CD4-positive, alpha-beta T cell (primary cell): ENCODE measurements at regions of chr3 and their contacts with region 1.

Region 1: DNA sequence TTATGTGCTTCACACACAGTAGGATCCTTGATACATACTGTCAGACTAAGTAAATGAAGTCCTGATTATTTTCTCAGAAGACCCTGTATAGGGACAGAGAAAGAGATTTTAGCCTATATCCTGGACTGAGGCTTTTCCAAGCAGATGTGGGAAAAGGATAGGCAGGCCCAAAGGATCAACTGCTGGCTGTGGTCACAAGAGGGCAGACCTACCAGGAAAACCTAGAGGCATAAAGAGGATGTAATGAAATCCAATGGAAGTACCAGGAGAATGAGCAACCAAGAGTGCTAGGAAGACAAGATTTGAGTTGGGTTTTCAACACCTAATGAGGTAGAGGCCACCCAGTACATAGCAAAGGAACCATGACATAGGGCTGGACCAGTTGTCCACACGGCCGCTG is 23.1 kb downstream of the DCLK3 start:
- DNase-seq: no peak
- ATAC-seq: no peak
- H3K4me3 ChIP-seq: no peak overlapping the region
- H3K4me3 Mint-ChIP-seq: no peak overlapping the region
- H3K27ac ChIP-seq: no peak overlapping the region
- H3K27ac Mint-ChIP-seq: no peak overlapping the region
- H3K4me1 ChIP-seq: no peaks in the 10 kb centered on the region
- H3K4me1 Mint-ChIP-seq: no peaks in the 10 kb centered on the region
- H3K27me3 ChIP-seq: peaks cover 0 to 7% of the 10 kb centered on the region in 2 experiments
- H3K27me3 Mint-ChIP-seq: no peaks in the 10 kb centered on the region
- CTCF ChIP-seq: no peak

Region 2: GRCh38 chr3:37295925-37296324 is 554.6 kb after region 1 on chr3:
- CTCF ChIA-PET with region 1: no interaction called
- POLR2A ChIA-PET with region 1: no interaction called
- intact Hi-C with region 1: loop called in 1 of 2 experiments (anchors 5 kb)
- DNase-seq: peak in 1 of 14 experiments; percentile 9
- ATAC-seq: no peak
- H3K4me3 ChIP-seq: no peak overlapping the region
- H3K4me3 Mint-ChIP-seq: no peak overlapping the region
- H3K27ac ChIP-seq: no peak overlapping the region
- H3K27ac Mint-ChIP-seq: no peak overlapping the region
- H3K4me1 ChIP-seq: no peaks in the 10 kb centered on the region
- H3K4me1 Mint-ChIP-seq: peaks cover 3% of the 10 kb centered on the region
- H3K27me3 ChIP-seq: no peaks in the 10 kb centered on the region
- H3K27me3 Mint-ChIP-seq: no peaks in the 10 kb centered on the region
- CTCF ChIP-seq: no peak